ENCODE measurements at regions of chr11 and their contacts with region 1.

Region 1: DNA sequence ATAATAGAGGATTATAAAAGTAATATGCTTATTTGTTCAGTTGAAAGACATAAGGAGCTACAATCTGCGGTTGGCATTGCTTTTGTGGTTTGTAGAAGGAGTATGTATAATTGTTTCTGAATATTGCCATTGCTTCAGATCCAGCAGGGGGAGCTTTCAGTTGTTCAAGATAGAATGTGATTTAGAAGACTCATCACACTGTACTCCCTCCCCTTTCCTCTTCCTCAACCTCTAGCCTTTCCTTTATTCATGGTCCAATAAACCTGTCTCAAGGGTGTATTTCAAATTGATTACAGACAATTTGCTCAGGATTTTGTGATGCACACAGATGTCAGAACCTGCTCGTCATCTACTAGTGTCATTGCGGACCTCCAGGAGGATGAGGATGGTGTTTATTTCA is 9.8 kb downstream of the PRMT3 start:
- DNase-seq: peak; percentile 34
- H3K4me3 Mint-ChIP-seq: no peak overlapping the region
- H3K27ac Mint-ChIP-seq: no peak overlapping the region
- H3K4me1 Mint-ChIP-seq: peaks cover 21% of the 10 kb centered on the region
- H3K27me3 Mint-ChIP-seq: no peaks in the 10 kb centered on the region

Region 2: GRCh38 chr11:20342347-20343141 is 54.7 kb before region 1 on chr11:
- CTCF ChIA-PET with region 1: no interaction called
- POLR2A ChIA-PET with region 1: no interaction called
- DNase-seq: no peak
- H3K4me3 Mint-ChIP-seq: no peak overlapping the region
- H3K27ac Mint-ChIP-seq: no peak overlapping the region
- H3K4me1 Mint-ChIP-seq: no peaks in the 10 kb centered on the region
- H3K27me3 Mint-ChIP-seq: peaks cover 75% of the 10 kb centered on the region

Region 3: GRCh38 chr11:20443596-20443995 is 46.3 kb after region 1 on chr11:
- CTCF ChIA-PET with region 1: interaction called, 15 read pairs
- POLR2A ChIA-PET with region 1: no interaction called
- DNase-seq: no peak
- H3K4me3 Mint-ChIP-seq: no peak overlapping the region
- H3K27ac Mint-ChIP-seq: no peak overlapping the region
- H3K4me1 Mint-ChIP-seq: peaks cover 2% of the 10 kb centered on the region
- H3K27me3 Mint-ChIP-seq: no peaks in the 10 kb centered on the region